PC-3 (cell line): ENCODE measurements at regions of chr3 and their contacts with region 1.

Region 1: GRCh38 chr3:113531826-113532697 is at the start of gene SIDT1:
- DNase-seq: peak; percentile 76
- ATAC-seq: peak; percentile 43
- H3K4me3 ChIP-seq: peak within 1 kb of the TSS; percentile 84
- H3K27ac ChIP-seq: peak within 1 kb of the TSS; percentile 95
- H3K4me1 ChIP-seq: peaks cover 44% of the 10 kb centered on the region
- H3K27me3 ChIP-seq: no peaks in the 10 kb centered on the region
- CTCF ChIP-seq: peak; percentile 35
- total RNA-seq, gene SIDT1: 14.1 and 18.4 TPM in 2 replicates

Region 2: DNA sequence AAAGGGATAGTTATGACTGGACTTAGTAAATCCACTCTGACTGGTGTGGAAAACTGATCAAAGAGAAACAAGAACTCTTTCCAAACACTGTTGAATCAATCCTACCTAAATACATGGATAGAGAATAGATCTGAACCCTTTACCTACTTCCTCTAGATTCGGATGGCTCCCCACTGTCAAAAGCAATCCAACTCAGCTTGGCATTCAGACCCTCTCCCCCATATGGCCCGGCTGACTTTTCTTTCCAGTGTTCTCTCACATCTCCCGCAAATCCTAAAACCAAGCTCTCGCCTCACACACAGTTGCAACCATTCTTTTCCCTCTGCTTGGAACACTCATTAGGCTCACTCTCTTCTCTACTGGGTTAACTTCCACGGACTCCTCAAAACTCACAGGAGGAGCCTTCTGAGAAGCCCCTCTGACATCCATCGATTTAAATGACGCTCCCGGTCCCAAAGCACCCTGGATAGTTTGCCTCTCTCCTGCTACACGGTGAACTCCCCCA is 17.7 kb before region 1 on chr3:
- CTCF ChIA-PET with region 1: interaction called, 5 read pairs
- POLR2A ChIA-PET with region 1: interaction called, 10 read pairs
- intact Hi-C with region 1: loop called (anchors 1 kb)
- DNase-seq: no peak
- ATAC-seq: no peak; the same call in 1 of the 2 replicates
- H3K4me3 ChIP-seq: peak overlapping the region; percentile 89
- H3K27ac ChIP-seq: peak overlapping the region; percentile 81
- H3K4me1 ChIP-seq: peaks cover 19% of the 10 kb centered on the region
- H3K27me3 ChIP-seq: no peaks in the 10 kb centered on the region
- CTCF ChIP-seq: no peak

Region 3: DNA sequence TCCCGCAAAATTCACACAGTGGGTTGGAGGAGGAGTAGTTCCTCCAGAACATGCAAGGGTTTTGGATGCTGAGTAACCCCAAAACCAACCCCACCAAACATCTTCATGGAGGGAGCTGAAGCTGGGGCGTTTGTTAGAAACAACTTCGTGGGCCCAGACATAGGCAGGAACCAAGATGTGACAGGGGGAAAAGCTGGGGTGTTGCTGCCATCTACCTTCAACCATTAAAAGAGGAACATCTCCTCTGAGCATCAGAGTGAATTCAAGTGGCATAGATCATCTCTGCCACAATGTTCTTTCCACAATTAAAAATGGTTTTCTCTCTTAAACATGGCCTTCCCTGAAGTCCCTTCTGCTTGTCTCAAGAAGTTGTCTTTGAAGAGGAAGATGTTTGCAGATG is 20.8 kb after region 1 on chr3:
- CTCF ChIA-PET with region 1: no interaction called
- POLR2A ChIA-PET with region 1: interaction called, 18 read pairs
- intact Hi-C with region 1: loop called (anchors 1 kb)
- DNase-seq: peak; percentile 26
- ATAC-seq: no peak
- H3K4me3 ChIP-seq: no peak overlapping the region
- H3K27ac ChIP-seq: peak overlapping the region; percentile 96
- H3K4me1 ChIP-seq: peaks cover 63% of the 10 kb centered on the region
- H3K27me3 ChIP-seq: no peaks in the 10 kb centered on the region
- CTCF ChIP-seq: peak; percentile 41